Dorsolateral prefrontal cortex (tissue), 120 donors: ENCODE measurements at regions of chr4 and their contacts with region 1.

Region 1: GRCh38 chr4:109815151-109816081 is at the start of gene GAR1:
- DNase-seq: peak; percentile 74 to 93 (median 91)
- H3K4me3 ChIP-seq: peak within 1 kb of the TSS; percentile 54 to 98 (median 86)
- H3K27ac ChIP-seq: peak within 1 kb of the TSS in 53 of 59 donors; percentile 8 to 90 (median 74)
- H3K27me3 ChIP-seq: no peaks in the 10 kb centered on the region
- CTCF ChIP-seq: peak in 32 of 56 donors; percentile 5 to 43 (median 21)
- total RNA-seq, gene GAR1: 5.6 to 15.2 (median 9.3) TPM

Region 2: DNA sequence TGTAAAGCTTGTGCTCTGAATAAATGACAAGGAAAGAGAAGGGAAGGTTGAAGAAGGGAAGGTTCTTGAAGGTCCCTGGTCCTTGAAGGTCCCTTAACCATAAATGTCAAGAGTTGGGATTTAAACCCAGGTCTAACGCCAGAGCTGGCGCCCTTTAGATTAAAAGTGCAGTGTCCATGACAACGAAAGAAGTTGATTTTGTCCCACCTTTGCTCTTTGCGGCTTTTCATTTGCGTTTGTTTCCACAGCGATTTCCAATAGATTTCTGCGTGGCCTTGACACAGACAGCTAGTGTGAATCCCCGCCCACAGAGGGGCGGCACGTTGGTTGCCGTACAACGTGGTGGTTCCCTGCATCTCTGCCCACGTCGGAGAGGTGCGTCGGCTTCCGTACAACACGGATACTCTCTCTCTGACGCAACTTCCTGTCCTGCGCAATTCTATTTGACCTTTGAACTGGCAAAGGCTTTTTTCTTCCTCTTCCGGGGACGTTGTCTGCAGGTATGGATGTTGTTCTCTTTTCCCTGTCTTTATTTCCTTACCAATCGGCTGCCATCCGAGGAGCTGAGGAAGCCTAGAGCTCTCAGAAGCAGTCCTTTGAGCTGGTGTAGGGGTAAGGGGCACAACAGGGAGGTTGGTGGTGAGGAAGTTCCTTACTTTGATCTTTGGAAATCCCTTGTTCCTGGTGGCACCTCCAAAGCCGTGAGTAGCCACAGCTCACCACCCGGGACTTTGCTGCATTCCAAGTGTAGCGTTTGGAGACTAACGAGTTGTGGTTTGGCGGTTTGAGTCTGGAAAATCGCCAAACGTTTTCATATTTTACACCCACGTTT is 1195.1 kb before region 1 on chr4 and contains the start of gene RPL34:
- intact Hi-C with region 1: loop called in 1 of 2 experiments (anchors 2 kb)
- DNase-seq: peak; percentile 94 to 99 (median 98)
- H3K4me3 ChIP-seq: peak within 1 kb of the TSS; percentile 53 to 99 (median 83)
- H3K27ac ChIP-seq: peak within 1 kb of the TSS in 56 of 59 donors; percentile 33 to 90 (median 77)
- H3K27me3 ChIP-seq: no peaks in the 10 kb centered on the region
- CTCF ChIP-seq: peak in 30 of 56 donors; percentile 4 to 57 (median 28)
- total RNA-seq, gene RPL34: 385 to 625 (median 488) TPM

Region 3: DNA sequence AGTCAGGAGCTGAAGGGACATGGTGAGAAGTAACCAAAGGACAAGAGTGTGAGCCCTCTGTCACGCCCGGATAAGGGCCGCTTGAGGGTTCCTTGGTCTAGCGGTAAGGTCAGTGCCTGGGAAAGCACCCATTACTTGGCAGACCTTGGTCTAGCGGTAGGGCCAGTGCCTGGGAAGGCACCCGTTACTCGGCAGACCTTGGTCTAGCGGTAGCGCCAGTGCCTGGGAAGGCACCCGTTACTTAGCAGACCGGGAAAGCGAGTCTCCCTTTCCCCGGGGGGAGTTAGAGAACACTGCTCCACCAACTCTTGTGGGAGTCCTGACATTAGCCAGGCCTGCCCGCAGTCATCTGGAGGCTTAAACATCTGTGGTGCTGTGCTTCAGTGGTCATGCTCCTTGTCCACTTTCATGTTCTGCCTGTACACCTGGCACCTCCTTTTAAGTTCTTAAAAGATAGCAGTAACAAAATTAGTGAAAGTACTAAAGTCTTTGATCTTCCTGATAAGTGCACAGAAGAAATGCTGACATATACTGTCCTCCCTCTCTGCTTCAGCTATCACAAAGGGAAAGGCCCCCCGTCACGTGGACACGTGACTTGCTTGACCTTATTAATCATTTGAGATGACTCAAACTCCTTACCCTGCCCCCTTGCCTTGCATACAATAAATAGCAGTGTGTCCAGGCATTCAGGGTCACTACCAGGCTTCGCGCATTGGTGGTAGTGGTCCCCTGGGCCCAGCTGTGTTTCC is 391.1 kb before region 1 on chr4:
- intact Hi-C with region 1: loop called in 1 of 2 experiments (anchors 5 kb)
- DNase-seq: no peak
- H3K4me3 ChIP-seq: no peak overlapping the region
- H3K27ac ChIP-seq: no peak overlapping the region
- H3K27me3 ChIP-seq: no peaks in the 10 kb centered on the region
- CTCF ChIP-seq: no peak

Region 4: GRCh38 chr4:109702950-109703663 is 112.3 kb before region 1 on chr4 and contains the start of gene CASP6:
- intact Hi-C with region 1: loop called (anchors 10 kb)
- DNase-seq: peak; percentile 59 to 84 (median 70)
- H3K4me3 ChIP-seq: peak within 1 kb of the TSS; percentile 59 to 93 (median 82)
- H3K27ac ChIP-seq: peak within 1 kb of the TSS in 50 of 59 donors; percentile 3 to 87 (median 62)
- H3K27me3 ChIP-seq: no peaks in the 10 kb centered on the region
- CTCF ChIP-seq: peak in 53 of 56 donors; percentile 33 to 74 (median 59)
- total RNA-seq, gene CASP6: 1.6 to 17.7 (median 6.1) TPM

Region 5: GRCh38 chr4:109729718-109730618 is 85.4 kb before region 1 on chr4 and contains the start of gene PLA2G12A:
- intact Hi-C with region 1: loop called (anchors 2 to 5 kb)
- DNase-seq: peak; percentile 39 to 80 (median 56)
- H3K4me3 ChIP-seq: peak within 1 kb of the TSS; percentile 54 to 99 (median 91)
- H3K27ac ChIP-seq: peak within 1 kb of the TSS in 52 of 59 donors; percentile 5 to 88 (median 72)
- H3K27me3 ChIP-seq: no peaks in the 10 kb centered on the region
- CTCF ChIP-seq: peak in 3 of 56 donors; percentile 5 to 17 (median 5)
- total RNA-seq, gene PLA2G12A: 30.2 to 64.0 (median 40.2) TPM

Region 6: DNA sequence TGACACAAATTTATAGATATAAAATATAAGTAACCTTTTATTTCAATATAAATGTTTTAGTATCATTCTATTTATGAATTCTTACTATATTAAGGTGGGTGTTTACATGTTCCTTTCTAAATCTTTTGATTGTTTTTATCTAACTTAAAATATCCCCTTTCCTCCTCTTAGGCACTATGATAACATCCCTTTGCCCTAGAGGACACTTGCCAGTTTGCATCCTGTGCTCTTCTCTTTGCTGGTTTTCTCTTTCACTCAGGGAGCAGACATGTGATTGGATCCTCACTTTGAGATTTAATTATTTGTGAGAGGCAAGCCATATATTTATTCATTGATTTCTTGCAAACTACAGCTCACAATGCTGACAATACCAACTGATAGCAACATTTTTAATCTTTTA is 48.7 kb after region 1 on chr4:
- intact Hi-C with region 1: no loop called
- DNase-seq: no peak
- H3K4me3 ChIP-seq: no peak overlapping the region
- H3K27ac ChIP-seq: no peak overlapping the region
- H3K27me3 ChIP-seq: no peaks in the 10 kb centered on the region
- CTCF ChIP-seq: no peak

Region 7: DNA sequence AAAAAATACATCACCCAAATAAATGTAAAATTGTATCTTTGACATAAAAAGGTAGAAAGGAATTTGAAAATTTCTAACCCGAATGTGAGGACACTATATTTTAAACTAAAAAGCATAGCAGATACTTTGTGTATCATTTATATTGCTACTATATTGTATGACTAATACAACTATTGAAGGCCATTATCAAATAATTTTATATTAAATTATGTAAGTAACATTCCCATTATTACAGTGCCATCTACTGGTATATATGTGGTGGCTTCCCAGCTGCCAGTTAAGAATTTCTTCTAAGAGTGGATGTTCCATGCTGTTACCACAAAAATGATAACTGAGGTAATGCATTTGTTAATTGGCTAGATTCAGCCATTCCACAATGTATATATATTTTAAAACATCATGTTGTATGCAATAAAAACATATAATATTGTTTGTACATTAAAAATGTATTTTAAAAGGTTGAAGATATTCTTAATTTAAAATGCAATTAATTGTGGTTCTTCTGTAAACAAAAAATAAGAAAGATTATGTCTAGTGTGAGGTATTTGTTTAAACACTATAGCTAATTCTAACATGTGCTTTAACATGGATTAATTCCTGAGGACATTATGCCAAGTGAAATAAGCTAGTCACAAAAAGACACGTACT is 162.6 kb after region 1 on chr4:
- intact Hi-C with region 1: loop called in 1 of 2 experiments (anchors 10 kb)
- DNase-seq: no peak
- H3K4me3 ChIP-seq: no peak overlapping the region
- H3K27ac ChIP-seq: no peak overlapping the region
- H3K27me3 ChIP-seq: peaks cover 0 to 9% (median 0%) of the 10 kb centered on the region in 45 donors
- CTCF ChIP-seq: peak in 55 of 56 donors; percentile 47 to 82 (median 68)

Region 8: DNA sequence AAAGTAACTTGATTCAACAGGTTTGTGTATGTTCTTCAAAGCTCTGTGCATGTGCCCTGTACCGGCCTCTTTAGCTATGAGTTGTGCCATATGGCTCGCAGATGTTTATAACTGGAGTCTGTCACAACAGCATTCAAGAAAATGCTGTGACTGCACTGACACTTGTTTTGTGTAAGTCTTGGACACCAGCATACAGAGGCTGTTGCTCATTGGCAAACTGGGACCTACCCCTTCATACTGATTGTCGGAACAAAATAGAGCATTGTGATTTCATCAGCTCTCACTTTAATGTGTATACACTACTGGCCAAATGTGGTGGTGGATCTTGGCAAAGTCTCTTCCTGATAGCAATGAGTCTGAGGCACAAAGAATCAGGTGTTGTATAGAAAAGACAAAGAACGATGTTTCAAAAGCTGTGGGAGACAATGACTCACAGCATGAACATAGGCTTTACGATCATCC is 231.2 kb after region 1 on chr4:
- intact Hi-C with region 1: no loop called
- DNase-seq: no peak
- H3K4me3 ChIP-seq: peak overlapping the region in 3 of 59 donors; percentile 8 to 23 (median 9)
- H3K27ac ChIP-seq: peak overlapping the region in 29 of 59 donors; percentile 1 to 72 (median 32)
- H3K27me3 ChIP-seq: no peaks in the 10 kb centered on the region
- CTCF ChIP-seq: no peak